ENCODE measurements at regions of chr22 and their contacts with region 1.

Region 1: GRCh38 chr22:19629720-19630419 is 84.4 kb upstream of the SEPTIN5 start:
- H3K4me3 ChIP-seq: no peak overlapping the region
- H3K27ac ChIP-seq: no peak overlapping the region
- H3K4me1 ChIP-seq: no peaks in the 10 kb centered on the region
- CTCF ChIP-seq: peak; percentile 94

Region 2: DNA sequence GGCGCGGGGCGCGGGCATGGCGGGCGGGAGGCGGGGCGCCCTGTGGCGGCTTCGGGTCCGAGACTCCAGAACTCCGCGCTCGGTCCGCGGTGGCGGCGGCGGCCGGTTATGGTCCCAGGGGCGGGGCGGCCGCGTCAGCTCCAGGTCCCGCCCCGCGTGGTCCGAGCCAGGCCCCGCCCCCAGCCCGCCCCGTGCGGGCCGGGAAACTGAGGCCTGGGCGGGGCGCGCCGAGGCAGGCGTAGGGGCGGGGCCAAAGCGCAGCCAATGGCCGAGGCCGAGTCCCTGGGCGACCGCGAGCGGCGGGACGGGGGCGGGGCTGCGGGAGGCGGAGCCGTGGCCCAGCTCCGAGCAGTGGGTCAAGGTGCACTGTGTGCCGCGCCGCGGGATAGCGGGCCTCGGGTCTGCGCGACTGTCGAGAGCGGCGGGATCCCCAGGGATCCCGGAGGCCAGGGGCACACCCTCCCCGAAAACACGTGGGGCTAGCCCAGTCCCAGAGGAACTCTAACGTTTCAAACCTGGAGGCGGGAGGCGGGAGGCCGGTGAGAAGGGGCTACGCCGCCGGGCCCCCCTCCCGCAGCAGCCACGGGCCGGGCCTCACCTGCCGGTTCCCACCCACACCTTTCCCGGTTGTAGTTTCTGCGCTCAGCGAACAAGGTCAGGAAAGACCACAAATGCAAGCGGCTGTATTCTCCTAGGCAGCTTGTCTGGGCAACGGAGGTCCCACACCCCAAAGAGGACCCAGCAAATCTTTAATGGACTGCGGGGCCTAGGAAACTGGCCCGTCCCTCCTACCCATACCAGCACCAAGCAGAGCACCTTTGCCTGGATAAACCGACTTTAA is 451.0 kb before region 1 on chr22 and contains the start of gene SLC25A1:
- CTCF ChIA-PET with region 1: interaction called, 14 read pairs
- POLR2A ChIA-PET with region 1: interaction called, 4 read pairs
- H3K4me3 ChIP-seq: peak within 1 kb of the TSS; percentile 82
- H3K27ac ChIP-seq: peak within 1 kb of the TSS; percentile 84
- H3K4me1 ChIP-seq: no peaks in the 10 kb centered on the region; the same call in 1 of the 2 replicates
- CTCF ChIP-seq: no peak

Region 3: DNA sequence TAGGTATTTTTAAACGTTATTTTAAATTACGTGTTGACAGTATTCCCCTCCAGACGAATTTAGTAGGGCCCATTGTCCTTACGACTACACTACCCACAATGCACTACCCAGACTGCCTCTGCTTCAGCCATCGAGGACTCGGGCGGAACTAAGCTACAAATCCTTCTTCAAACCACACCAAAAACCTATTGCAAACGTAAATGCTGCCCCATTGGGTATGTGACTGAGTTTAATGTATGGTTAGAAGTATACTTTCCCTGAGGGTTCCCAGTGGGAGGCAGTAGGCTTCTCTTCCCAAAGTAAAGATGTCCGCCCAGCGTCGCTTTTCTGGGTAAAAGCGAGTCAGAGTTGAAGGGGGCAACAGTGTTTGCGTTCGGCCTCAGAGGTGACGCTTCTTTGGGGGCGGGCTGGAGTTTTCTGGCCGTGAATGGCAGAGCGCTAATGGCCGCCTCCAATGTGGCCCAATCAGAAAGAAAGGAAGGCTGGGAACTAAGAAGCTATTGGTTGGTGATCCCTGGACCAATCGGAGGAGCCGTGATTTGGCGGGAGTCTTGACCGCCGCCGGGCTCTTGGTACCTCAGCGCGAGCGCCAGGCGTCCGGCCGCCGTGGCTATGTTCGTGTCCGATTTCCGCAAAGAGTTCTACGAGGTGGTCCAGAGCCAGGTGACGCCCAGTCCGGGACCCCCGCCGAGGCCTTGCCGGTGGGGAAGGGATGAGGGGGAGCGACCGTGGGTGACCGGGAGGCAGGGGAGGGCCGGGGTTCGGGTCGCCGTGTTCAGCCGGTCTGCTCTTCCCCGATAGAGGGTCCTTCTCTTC is 150.3 kb before region 1 on chr22 and contains the start of gene CDC45:
- CTCF ChIA-PET with region 1: interaction called, 31 read pairs
- POLR2A ChIA-PET with region 1: interaction called, 6 read pairs
- H3K4me3 ChIP-seq: peak within 1 kb of the TSS; percentile 92
- H3K27ac ChIP-seq: peak within 1 kb of the TSS; percentile 86
- H3K4me1 ChIP-seq: no peaks in the 10 kb centered on the region
- CTCF ChIP-seq: no peak

Region 4: DNA sequence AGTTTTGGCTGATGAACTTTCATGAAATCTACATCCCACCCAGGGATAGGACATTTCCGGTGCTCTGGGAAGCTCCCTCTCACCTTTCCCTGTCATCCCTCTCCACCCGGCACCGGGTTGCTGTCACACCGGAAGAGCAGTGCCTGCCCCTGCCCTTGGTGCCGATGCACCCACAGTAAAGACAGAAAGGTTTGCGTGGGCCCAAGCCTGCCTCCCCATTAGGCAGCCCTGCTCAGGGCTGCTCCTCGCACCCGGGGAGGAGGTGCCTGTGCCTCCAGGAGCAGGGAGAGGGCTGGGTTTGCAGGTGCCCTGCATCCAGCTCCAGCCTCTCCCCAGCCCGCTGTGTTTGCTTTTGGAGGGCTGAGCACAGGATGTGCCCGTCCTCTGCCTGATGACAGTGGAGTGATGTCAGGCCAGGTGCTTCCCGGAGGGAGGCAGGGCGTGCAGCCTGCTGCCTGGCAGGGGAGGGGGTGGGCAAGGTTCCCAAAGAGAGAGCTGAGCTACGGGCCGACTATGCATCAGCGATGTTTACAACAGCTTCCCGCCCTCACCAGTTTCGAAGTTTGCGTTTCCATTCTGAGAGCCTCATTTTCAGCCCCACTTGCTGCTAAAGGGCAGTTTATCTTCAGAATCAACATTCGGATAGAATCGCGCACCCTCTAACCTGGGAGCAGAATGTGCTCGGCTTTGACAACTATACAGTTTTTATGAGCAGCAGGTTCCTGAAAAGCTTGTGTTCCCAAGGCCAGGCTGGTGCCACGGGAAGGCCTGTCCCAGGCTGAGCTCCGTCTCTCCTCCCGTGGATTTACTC is 22.5 kb before region 1 on chr22:
- CTCF ChIA-PET with region 1: interaction called, 12 read pairs
- POLR2A ChIA-PET with region 1: no interaction called
- H3K4me3 ChIP-seq: no peak overlapping the region
- H3K27ac ChIP-seq: no peak overlapping the region
- H3K4me1 ChIP-seq: no peaks in the 10 kb centered on the region
- CTCF ChIP-seq: no peak

Region 5: DNA sequence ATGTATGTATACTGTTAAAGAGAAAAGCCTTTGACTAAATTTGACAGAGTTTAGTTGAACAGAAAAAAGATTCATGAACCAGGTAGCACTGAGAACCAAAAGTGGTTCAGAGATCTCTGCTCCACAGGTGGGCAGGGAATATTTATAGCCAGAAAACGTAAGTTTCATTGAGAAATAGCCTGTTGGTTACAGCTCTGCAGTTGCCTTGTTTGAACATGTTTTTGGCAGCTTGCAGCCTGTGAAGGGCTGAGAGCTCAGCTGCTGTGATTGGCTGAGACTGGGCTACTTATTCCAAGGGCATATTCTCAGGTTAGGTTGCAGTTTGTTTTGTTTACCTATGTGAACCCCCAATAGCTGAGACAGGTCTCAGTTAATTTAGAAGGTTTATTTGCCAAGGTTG is 750.6 kb after region 1 on chr22:
- CTCF ChIA-PET with region 1: no interaction called
- POLR2A ChIA-PET with region 1: no interaction called
- H3K4me3 ChIP-seq: no peak overlapping the region
- H3K27ac ChIP-seq: no peak overlapping the region
- H3K4me1 ChIP-seq: no peaks in the 10 kb centered on the region
- CTCF ChIP-seq: no peak

Measured in HEK293 (cell line).